Dorsolateral prefrontal cortex (tissue), 120 donors: ENCODE measurements at regions of chr3 and their contacts with region 1.

Region 1: DNA sequence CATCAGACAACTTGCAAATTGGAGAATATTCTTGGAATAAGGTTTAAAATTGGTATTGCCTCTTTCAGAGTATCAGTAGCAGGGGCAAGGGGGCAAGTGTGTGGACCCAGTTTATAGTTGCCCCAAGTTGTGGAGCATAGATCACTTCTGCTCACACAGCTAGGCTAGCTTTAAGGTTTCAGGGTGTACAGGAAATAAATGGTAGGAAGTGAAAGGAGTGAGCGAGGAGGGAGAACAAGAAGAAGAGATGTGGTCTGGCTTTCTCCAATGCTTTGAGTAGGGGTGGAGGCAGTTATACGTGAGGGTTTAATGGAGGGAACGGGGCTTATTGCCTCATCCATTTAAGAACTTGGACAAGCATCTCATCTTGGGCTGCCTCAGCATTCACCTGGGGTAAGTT is 290.0 kb upstream of the CFAP20DC start:
- DNase-seq: no peak
- H3K4me3 ChIP-seq: no peak overlapping the region
- H3K27ac ChIP-seq: no peak overlapping the region
- H3K27me3 ChIP-seq: peaks cover 0 to 4% (median 0%) of the 10 kb centered on the region in 45 donors
- CTCF ChIP-seq: no peak

Region 2: GRCh38 chr3:59308684-59309083 is 31.1 kb before region 1 on chr3:
- intact Hi-C with region 1: no loop called
- DNase-seq: no peak
- H3K4me3 ChIP-seq: no peak overlapping the region
- H3K27ac ChIP-seq: no peak overlapping the region
- H3K27me3 ChIP-seq: peaks cover 0 to 2% (median 0%) of the 10 kb centered on the region in 45 donors
- CTCF ChIP-seq: peak in 2 of 56 donors; percentile 19 to 24

Region 3: GRCh38 chr3:59374818-59375211 is 35.0 kb after region 1 on chr3:
- intact Hi-C with region 1: loop called in 1 of 2 experiments (anchors 5 kb)
- DNase-seq: no peak
- H3K4me3 ChIP-seq: no peak overlapping the region
- H3K27ac ChIP-seq: no peak overlapping the region
- H3K27me3 ChIP-seq: no peaks in the 10 kb centered on the region
- CTCF ChIP-seq: no peak